H1 (cell line): ENCODE measurements at regions of chr1 and their contacts with region 1.

Region 1: GRCh38 chr1:155145491-155145890 is 5.2 kb upstream of the DPM3 start:
- DNase-seq: no peak
- H3K4me3 ChIP-seq: no peak overlapping the region
- H3K27ac ChIP-seq: no peak overlapping the region
- H3K4me1 ChIP-seq: no peaks in the 10 kb centered on the region
- H3K27me3 ChIP-seq: peaks cover 0 to 3% (median 0%) of the 10 kb centered on the region in 4 experiments; a peak in 2 of 7 replicates
- CTCF ChIP-seq: peak in 2 of 3 experiments; percentile 24 to 30; a peak in 2 of 4 replicates
- EP300 ChIP-seq: no peak
- POLR2A ChIP-seq: no peak
- RAD21 ChIP-seq: peak in 1 of 2 experiments; percentile 22; a peak in 2 of 4 replicates

Region 2: GRCh38 chr1:155158979-155159378 is 13.5 kb after region 1 on chr1:
- CTCF ChIA-PET with region 1: interaction called, 11 read pairs
- POLR2A ChIA-PET with region 1: interaction called, 4 read pairs
- DNase-seq: no peak
- H3K4me3 ChIP-seq: no peak overlapping the region
- H3K27ac ChIP-seq: no peak overlapping the region
- H3K4me1 ChIP-seq: no peaks in the 10 kb centered on the region
- H3K27me3 ChIP-seq: no peaks in the 10 kb centered on the region
- CTCF ChIP-seq: no peak
- EP300 ChIP-seq: no peak
- POLR2A ChIP-seq: no peak
- RAD21 ChIP-seq: no peak

Region 3: DNA sequence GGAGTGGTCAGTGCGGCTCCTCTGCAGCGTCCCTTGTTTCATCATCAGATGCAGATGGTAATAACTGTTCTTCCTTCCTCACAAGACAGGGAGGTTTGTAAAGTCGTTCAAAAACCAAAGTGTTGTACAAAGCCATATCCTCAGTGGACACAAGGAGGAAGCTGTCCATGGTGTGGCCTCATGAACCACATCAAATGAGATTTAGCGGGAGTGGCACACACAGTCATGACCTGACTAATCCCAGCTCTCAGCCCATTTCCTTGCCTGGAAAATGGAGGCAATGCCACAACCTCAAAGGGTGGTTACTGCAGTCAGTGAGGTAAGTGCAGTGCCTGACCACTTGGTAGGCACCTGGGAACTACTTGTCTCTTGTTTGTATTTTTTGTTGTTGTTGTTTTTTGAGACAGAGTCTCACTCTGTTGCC is 96.4 kb after region 1 on chr1:
- CTCF ChIA-PET with region 1: no interaction called
- POLR2A ChIA-PET with region 1: no interaction called
- DNase-seq: no peak
- H3K4me3 ChIP-seq: no peak overlapping the region
- H3K27ac ChIP-seq: no peak overlapping the region
- H3K4me1 ChIP-seq: peaks cover 0 to 4% (median 1%) of the 10 kb centered on the region in 4 experiments; a peak in 2 of 7 replicates
- H3K27me3 ChIP-seq: peaks cover 0 to 14% (median 4%) of the 10 kb centered on the region in 4 experiments; a peak in 2 of 7 replicates
- CTCF ChIP-seq: no peak
- EP300 ChIP-seq: no peak
- POLR2A ChIP-seq: no peak
- RAD21 ChIP-seq: no peak